ENCODE measurements at regions of chr13 and their contacts with region 1.

Region 1: DNA sequence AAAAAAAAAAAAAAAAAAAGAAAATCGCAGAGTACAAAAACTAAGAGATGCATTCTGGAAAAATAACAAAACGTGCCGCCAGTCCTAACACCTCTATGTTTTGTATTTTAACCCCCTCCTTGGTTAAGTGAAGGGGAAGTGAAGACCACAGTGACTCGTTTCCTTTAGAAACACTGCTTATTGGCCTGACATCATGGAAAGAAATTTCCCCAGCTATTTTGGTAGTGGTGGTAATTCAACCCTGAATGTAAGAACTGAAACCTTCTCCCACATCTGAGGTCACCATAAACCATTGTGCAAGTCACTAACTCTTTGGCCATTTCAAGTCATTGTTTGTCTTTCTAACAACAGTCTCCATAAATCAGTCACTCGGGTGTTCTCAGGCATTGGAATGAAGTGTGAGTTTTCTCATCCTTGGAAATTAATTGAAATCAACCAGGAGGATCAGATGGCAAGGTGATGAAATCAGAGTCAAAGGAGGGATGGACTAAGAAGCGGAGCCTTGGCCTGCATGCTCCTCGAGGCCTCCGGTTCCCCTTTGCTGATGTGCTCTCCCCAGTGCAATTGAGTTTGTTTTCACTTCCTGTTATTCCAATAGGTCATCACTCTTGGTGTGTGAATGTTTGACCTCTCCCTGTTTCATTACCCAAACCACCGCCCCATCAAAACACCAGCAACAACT is 443.9 kb downstream of the FGF9 start:
- DNase-seq: peak; percentile 55
- H3K4me3 Mint-ChIP-seq: peak overlapping the region; percentile 16
- H3K27ac Mint-ChIP-seq: peak overlapping the region; percentile 87
- H3K4me1 Mint-ChIP-seq: peaks cover 62% of the 10 kb centered on the region
- H3K27me3 Mint-ChIP-seq: peaks cover 2% of the 10 kb centered on the region

Region 2: GRCh38 chr13:21603531-21604448 is 511.0 kb before region 1 on chr13 and contains the start of gene MICU2:
- intact Hi-C with region 1: loop called (anchors 5 kb)
- DNase-seq: peak; percentile 94
- H3K4me3 Mint-ChIP-seq: peak within 1 kb of the TSS; percentile 85
- H3K27ac Mint-ChIP-seq: peak within 1 kb of the TSS; percentile 88
- H3K4me1 Mint-ChIP-seq: peaks cover 24% of the 10 kb centered on the region
- H3K27me3 Mint-ChIP-seq: peaks cover 24% of the 10 kb centered on the region
- total RNA-seq, gene MICU2: 32.5 and 33.8 TPM in 2 replicates

Region 3: GRCh38 chr13:22017226-22017625 is 97.5 kb before region 1 on chr13:
- intact Hi-C with region 1: loop called (anchors 5 kb)
- DNase-seq: no peak
- H3K4me3 Mint-ChIP-seq: no peak overlapping the region
- H3K27ac Mint-ChIP-seq: no peak overlapping the region
- H3K4me1 Mint-ChIP-seq: peaks cover 11% of the 10 kb centered on the region
- H3K27me3 Mint-ChIP-seq: no peaks in the 10 kb centered on the region

Region 4: DNA sequence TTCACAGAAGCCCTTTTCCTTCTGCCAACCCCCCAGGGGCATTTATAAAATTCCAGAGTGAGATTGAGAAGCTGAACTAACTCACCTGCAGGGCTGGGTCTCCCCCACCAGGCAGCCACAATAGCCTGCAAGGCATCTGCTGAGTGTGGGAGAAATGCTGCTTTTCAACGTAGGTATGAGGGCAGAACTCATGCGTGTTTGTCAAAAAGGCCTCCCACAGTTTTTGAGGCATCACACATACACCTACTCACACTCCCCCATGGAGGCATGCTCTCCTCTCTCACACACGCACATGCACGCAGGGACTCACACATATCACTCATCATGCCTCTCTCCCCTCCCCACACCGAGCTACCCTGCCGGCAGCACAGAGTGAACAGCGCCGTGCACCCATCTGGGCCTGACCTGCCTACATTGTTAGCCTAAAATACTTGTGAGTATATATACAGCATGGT is 53.4 kb before region 1 on chr13:
- intact Hi-C with region 1: loop called (anchors 1 kb)
- DNase-seq: peak; percentile 28
- H3K4me3 Mint-ChIP-seq: peak overlapping the region; percentile 53
- H3K27ac Mint-ChIP-seq: peak overlapping the region; percentile 83
- H3K4me1 Mint-ChIP-seq: peaks cover 65% of the 10 kb centered on the region
- H3K27me3 Mint-ChIP-seq: no peaks in the 10 kb centered on the region

Region 5: GRCh38 chr13:22073718-22074117 is 41.1 kb before region 1 on chr13:
- intact Hi-C with region 1: loop called (anchors 1 kb)
- DNase-seq: no peak
- H3K4me3 Mint-ChIP-seq: no peak overlapping the region
- H3K27ac Mint-ChIP-seq: peak overlapping the region; percentile 79
- H3K4me1 Mint-ChIP-seq: peaks cover 54% of the 10 kb centered on the region
- H3K27me3 Mint-ChIP-seq: no peaks in the 10 kb centered on the region

Region 6: DNA sequence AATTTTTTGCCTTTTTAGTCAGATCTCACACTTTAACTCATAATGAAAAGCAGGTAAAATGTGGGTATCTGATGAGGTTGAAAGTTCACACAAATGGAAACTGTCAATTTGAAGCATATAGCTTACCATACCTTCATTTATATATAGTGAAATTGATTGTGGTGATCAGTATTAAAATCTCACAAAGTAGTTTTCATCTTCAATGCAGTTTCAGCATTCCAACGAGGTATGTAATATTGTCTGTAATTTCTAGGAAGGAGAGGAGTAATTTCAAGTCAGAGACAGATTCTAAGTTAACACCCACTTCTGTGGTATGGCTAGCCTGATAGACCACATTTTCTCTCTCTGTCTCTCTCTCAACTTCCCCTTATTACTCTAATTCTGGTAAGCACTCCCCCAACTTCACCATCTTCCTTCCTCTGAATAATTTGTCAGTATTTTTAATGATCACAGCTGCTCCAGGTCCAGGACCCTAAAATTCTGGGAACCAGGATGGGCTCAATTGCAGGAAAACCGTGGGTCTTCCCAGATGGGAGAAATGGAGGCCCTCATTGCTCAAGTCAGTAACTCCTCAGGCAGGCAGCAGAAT is 11.8 kb after region 1 on chr13:
- intact Hi-C with region 1: loop called (anchors 1 kb)
- DNase-seq: no peak
- H3K4me3 Mint-ChIP-seq: peak overlapping the region; percentile 26
- H3K27ac Mint-ChIP-seq: peak overlapping the region; percentile 60
- H3K4me1 Mint-ChIP-seq: peaks cover 36% of the 10 kb centered on the region
- H3K27me3 Mint-ChIP-seq: peaks cover 2% of the 10 kb centered on the region

Region 7: DNA sequence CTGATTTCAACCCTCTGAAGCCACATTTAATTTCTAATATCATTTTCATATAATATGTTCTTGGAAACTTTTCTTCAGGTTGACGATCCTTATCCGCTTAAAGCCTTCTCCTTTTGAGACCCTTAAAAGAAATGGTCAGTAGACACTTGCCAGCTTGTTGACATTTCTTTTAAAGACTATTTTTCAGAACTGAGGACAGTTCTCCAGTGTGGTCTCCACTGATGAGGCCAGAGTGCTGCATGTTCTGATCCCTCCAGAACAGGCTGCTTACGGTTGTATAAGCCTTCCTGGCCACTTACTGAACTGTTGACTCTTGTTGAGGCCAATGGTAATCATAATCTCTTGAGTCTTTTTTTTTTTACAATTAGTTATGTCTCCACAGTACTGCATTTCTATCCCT is 33.4 kb after region 1 on chr13:
- intact Hi-C with region 1: no loop called
- DNase-seq: no peak
- H3K4me3 Mint-ChIP-seq: no peak overlapping the region
- H3K27ac Mint-ChIP-seq: no peak overlapping the region
- H3K4me1 Mint-ChIP-seq: no peaks in the 10 kb centered on the region
- H3K27me3 Mint-ChIP-seq: peaks cover 2% of the 10 kb centered on the region

Region 8: GRCh38 chr13:22161871-22162270 is 47.1 kb after region 1 on chr13:
- intact Hi-C with region 1: loop called (anchors 2 kb)
- DNase-seq: no peak
- H3K4me3 Mint-ChIP-seq: no peak overlapping the region
- H3K27ac Mint-ChIP-seq: no peak overlapping the region
- H3K4me1 Mint-ChIP-seq: peaks cover 19% of the 10 kb centered on the region
- H3K27me3 Mint-ChIP-seq: peaks cover 1% of the 10 kb centered on the region